Lower leg skin (tissue), 4 donors: ENCODE measurements at regions of chr6 and their contacts with region 1.

Region 1: GRCh38 chr6:68756454-68757375 is 121.6 kb downstream of the ADGRB3 start:
- DNase-seq: no peak
- H3K4me3 ChIP-seq: no peak overlapping the region
- CTCF ChIP-seq: no peak
- POLR2A ChIP-seq: no peak

Region 2: GRCh38 chr6:69005199-69005598 is 248.5 kb after region 1 on chr6:
- intact Hi-C with region 1: loop called (anchors 5 kb)
- DNase-seq: no peak
- H3K4me3 ChIP-seq: no peak overlapping the region
- CTCF ChIP-seq: no peak
- POLR2A ChIP-seq: no peak